ENCODE measurements at regions of chr7 and their contacts with region 1.

Region 1: DNA sequence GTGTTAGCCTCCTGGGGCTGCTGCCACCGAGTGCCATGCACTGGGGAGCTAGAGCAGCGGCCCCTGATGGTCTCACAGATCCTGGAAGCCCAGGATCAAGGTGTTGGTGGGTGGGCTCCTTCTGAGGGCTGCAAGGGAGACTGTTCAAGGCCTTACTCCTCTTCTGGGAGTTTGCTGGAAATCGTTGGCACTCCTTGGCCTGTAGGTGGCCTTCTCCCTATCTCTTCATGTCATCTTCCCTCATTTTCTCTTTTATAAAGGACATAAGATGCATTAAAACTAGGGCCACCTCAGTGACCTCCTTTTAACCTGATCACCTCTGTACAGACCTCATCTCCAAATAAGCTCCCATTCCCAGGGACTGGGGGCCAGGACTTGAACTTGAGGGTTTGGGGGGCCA is 27.0 kb upstream of the ZNF862 start:
- DNase-seq: no peak
- ATAC-seq: peak; percentile 58
- H3K4me3 Mint-ChIP-seq: no peak overlapping the region
- H3K27ac Mint-ChIP-seq: no peak overlapping the region
- H3K4me1 Mint-ChIP-seq: no peaks in the 10 kb centered on the region
- H3K27me3 Mint-ChIP-seq: no peaks in the 10 kb centered on the region
- CTCF ChIP-seq: no peak

Region 2: GRCh38 chr7:149790146-149790548 is 21.1 kb before region 1 on chr7:
- CTCF ChIA-PET with region 1: interaction called, 11 read pairs
- POLR2A ChIA-PET with region 1: no interaction called
- DNase-seq: peak; percentile 78
- ATAC-seq: peak; percentile 68
- H3K4me3 Mint-ChIP-seq: peak overlapping the region; percentile 64
- H3K27ac Mint-ChIP-seq: no peak overlapping the region
- H3K4me1 Mint-ChIP-seq: peaks cover 7% of the 10 kb centered on the region; the same call in 1 of the 2 replicates
- H3K27me3 Mint-ChIP-seq: peaks cover 47% of the 10 kb centered on the region
- CTCF ChIP-seq: peak; percentile 60

Region 3: GRCh38 chr7:149799397-149800171 is 11.6 kb before region 1 on chr7:
- CTCF ChIA-PET with region 1: interaction called, 43 read pairs
- POLR2A ChIA-PET with region 1: no interaction called
- DNase-seq: peak; percentile 83
- ATAC-seq: peak; percentile 80
- H3K4me3 Mint-ChIP-seq: no peak overlapping the region
- H3K27ac Mint-ChIP-seq: no peak overlapping the region
- H3K4me1 Mint-ChIP-seq: no peaks in the 10 kb centered on the region
- H3K27me3 Mint-ChIP-seq: no peaks in the 10 kb centered on the region
- CTCF ChIP-seq: peak; percentile 67

Region 4: GRCh38 chr7:149821447-149822191 is 10.4 kb after region 1 on chr7:
- CTCF ChIA-PET with region 1: interaction called, 20 read pairs
- POLR2A ChIA-PET with region 1: no interaction called
- DNase-seq: no peak
- ATAC-seq: no peak
- H3K4me3 Mint-ChIP-seq: no peak overlapping the region
- H3K27ac Mint-ChIP-seq: no peak overlapping the region
- H3K4me1 Mint-ChIP-seq: no peaks in the 10 kb centered on the region
- H3K27me3 Mint-ChIP-seq: no peaks in the 10 kb centered on the region; the same call in 1 of the 2 replicates
- CTCF ChIP-seq: no peak

Region 5: DNA sequence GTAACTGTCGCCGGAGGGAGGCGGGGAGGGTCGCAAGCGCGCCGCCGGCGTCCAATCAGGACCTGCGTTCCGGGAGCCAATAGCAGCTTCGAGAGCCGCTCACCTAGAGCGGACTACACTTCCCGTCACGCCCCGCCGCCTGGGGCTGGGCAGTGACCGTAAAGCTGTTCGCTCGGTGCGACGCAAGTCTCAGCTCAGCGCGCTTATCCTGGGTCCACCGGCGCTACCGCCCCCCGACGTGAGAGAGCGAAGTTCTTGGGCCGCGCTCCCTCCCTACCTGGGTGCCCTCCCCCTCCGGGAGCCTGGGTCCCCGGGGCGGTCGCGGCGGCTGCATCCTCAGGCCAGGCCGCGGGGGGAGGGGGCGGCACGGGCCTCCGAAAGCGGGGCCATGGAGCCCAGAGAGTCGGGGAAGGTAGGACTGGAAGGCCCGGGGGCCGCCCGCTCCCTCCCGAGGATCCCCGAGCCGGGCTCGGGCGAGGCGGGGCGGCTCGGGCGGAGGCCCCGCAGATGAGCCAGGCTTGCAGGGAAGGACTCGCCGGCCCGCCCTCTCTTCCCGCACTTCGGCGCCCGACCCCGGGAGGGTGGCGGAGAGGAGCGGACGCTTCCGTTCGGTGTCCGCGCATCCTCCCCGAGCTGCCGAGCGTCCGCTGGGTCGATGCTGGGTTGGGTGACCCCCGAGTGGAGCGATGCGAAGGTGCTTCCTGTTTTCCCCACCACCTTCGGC is 27.2 kb after region 1 on chr7 and contains the start of gene ZNF862:
- CTCF ChIA-PET with region 1: interaction called, 24 read pairs
- POLR2A ChIA-PET with region 1: no interaction called
- DNase-seq: peak; percentile 98
- ATAC-seq: peak; percentile 97
- H3K4me3 Mint-ChIP-seq: peak within 1 kb of the TSS; percentile 78
- H3K27ac Mint-ChIP-seq: peak within 1 kb of the TSS; percentile 77; the same call in 1 of the 2 replicates
- H3K4me1 Mint-ChIP-seq: peaks cover 13% of the 10 kb centered on the region
- H3K27me3 Mint-ChIP-seq: peaks cover 27% of the 10 kb centered on the region
- CTCF ChIP-seq: no peak
- total RNA-seq, gene ZNF862: 3.6 to 6.3 TPM (median 5.8 TPM) in 3 replicates

Region 6: GRCh38 chr7:149861446-149862045 is 50.3 kb after region 1 on chr7:
- CTCF ChIA-PET with region 1: interaction called, 16 read pairs
- POLR2A ChIA-PET with region 1: no interaction called
- DNase-seq: peak; percentile 80
- ATAC-seq: peak; percentile 93
- H3K4me3 Mint-ChIP-seq: no peak overlapping the region
- H3K27ac Mint-ChIP-seq: no peak overlapping the region
- H3K4me1 Mint-ChIP-seq: peaks cover 2% of the 10 kb centered on the region
- H3K27me3 Mint-ChIP-seq: no peaks in the 10 kb centered on the region
- CTCF ChIP-seq: peak; percentile 91